Activated B cell treated with CpG ODN at 0.5 μM for 24 hours (primary cell): ENCODE measurements at regions of chr17 and their contacts with region 1.

Region 1: DNA sequence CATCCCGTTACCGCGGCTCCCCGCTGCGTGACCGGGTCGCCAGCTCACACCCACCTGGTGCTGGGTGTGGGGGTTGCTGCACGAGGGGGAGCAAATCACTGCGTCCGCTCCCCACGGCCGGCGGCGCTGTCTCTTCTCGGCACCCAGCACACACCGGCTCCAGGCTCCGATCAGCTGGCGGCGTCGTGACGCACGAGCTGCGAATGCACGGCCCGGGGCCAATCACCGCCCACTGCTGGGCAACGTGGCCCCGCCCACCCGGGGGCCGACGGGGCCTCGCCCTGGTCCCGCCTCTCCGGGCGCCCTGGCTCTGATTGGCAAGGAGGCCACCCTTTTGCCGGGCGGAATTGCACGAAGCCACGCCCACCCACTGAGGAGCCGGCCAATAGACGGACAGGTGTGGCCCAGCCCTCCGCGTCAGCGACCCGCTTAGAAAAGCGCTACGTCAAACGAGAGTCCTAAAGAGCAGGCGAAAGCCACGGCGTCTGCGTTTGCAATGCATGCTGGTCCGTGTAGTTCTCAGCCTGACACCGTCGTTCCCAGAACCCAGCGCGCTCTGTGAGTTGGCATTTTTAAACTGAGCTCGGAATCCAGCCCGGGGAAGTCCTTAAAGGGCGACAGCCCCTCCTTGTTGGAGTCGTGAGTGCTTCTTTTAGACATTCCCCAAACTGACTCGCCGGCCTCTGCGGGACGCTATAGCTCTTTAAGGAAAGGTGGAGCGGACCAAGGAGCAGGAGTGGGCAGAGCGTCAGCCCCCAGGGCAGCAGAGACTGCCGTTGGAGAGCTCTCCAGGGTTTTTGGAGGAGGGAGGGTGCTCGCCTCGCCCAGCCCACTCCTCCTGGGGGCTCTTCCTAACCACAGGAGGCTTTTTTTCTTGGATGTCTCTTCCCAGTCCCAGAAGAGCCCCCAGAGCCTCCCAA is 6.2 kb upstream of the TLCD2 start:
- DNase-seq: peak; percentile 100
- ATAC-seq: peak; percentile 87
- H3K4me3 Mint-ChIP-seq: peak overlapping the region; percentile 91
- H3K27ac Mint-ChIP-seq: peak overlapping the region; percentile 94
- H3K4me1 Mint-ChIP-seq: peaks cover 28% of the 10 kb centered on the region
- H3K27me3 Mint-ChIP-seq: peaks cover 11% of the 10 kb centered on the region
- CTCF ChIP-seq: no peak

Region 2: GRCh38 chr17:1509290-1509881 is 206.9 kb before region 1 on chr17:
- CTCF ChIA-PET with region 1: no interaction called
- POLR2A ChIA-PET with region 1: no interaction called
- intact Hi-C with region 1: no loop called
- DNase-seq: no peak
- ATAC-seq: no peak
- H3K4me3 Mint-ChIP-seq: no peak overlapping the region
- H3K27ac Mint-ChIP-seq: no peak overlapping the region
- H3K4me1 Mint-ChIP-seq: peaks cover 1% of the 10 kb centered on the region
- H3K27me3 Mint-ChIP-seq: no peaks in the 10 kb centered on the region
- CTCF ChIP-seq: no peak

Region 3: GRCh38 chr17:1648963-1649843 is 67.1 kb before region 1 on chr17:
- CTCF ChIA-PET with region 1: interaction called, 10 read pairs
- POLR2A ChIA-PET with region 1: interaction called, 18 read pairs
- intact Hi-C with region 1: loop called (anchors 1 kb)
- DNase-seq: peak; percentile 93
- ATAC-seq: peak; percentile 69
- H3K4me3 Mint-ChIP-seq: peak overlapping the region; percentile 69
- H3K27ac Mint-ChIP-seq: no peak overlapping the region
- H3K4me1 Mint-ChIP-seq: peaks cover 41% of the 10 kb centered on the region
- H3K27me3 Mint-ChIP-seq: no peaks in the 10 kb centered on the region
- CTCF ChIP-seq: no peak

Region 4: GRCh38 chr17:1752425-1753262 is 36.3 kb after region 1 on chr17:
- CTCF ChIA-PET with region 1: interaction called, 19 read pairs
- POLR2A ChIA-PET with region 1: interaction called, 15 read pairs
- intact Hi-C with region 1: no loop called
- DNase-seq: no peak
- ATAC-seq: peak; percentile 86
- H3K4me3 Mint-ChIP-seq: peak overlapping the region; percentile 38
- H3K27ac Mint-ChIP-seq: no peak overlapping the region
- H3K4me1 Mint-ChIP-seq: peaks cover 15% of the 10 kb centered on the region
- H3K27me3 Mint-ChIP-seq: no peaks in the 10 kb centered on the region
- CTCF ChIP-seq: no peak

Region 5: GRCh38 chr17:1783834-1784611 is 67.7 kb after region 1 on chr17:
- CTCF ChIA-PET with region 1: interaction called, 175 read pairs
- POLR2A ChIA-PET with region 1: interaction called, 113 read pairs
- intact Hi-C with region 1: loop called (anchors 1 kb)
- DNase-seq: no peak
- ATAC-seq: peak; percentile 90
- H3K4me3 Mint-ChIP-seq: peak overlapping the region; percentile 44
- H3K27ac Mint-ChIP-seq: peak overlapping the region; percentile 84
- H3K4me1 Mint-ChIP-seq: peaks cover 33% of the 10 kb centered on the region
- H3K27me3 Mint-ChIP-seq: no peaks in the 10 kb centered on the region
- CTCF ChIP-seq: no peak

Region 6: DNA sequence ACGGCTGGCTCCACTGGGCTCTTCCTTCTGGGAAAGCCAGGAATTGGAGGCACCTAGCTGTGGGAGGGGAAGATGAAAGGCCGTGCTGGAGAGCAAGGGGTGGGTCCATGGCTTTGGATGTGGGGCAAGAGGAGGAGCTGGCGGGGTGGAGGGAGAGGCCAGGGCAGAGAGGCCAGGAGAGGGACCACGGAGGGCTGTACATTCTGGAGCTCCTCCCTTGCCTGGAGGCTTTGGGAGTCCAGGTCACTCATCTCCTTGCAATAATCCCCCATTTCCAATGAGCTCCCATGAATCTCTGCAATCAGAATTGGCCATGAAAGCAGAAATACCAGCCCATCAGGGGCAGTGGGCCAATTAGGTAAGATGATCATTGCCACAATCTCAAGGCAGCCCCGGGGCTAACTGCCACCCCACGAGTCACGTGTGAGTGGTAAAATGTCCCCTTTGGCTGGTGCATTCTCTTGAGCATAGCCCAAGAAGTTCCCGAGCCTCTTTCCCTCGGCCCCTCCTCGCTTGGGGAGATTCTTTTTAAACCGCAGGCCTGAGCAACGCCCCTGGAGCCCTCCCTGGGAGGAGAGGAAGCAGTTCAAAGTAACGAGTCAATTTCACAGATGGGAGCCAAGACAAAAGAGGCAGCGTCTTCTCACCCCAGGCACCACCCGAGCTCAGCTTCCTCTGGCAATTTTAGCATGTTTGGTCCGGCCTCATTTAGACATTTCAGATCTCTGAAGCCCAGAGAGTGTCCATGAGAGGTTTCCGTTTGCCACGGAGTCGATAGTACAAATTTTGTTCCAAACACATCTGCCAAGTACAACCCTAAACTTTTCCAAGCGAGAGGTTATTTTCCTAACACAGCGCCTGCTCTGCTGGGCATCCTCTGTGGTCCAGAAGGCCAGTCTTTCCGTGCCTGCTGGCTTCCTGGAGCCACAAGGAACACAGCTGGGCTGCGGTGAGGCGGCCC is 295.4 kb after region 1 on chr17:
- CTCF ChIA-PET with region 1: no interaction called
- POLR2A ChIA-PET with region 1: no interaction called
- intact Hi-C with region 1: no loop called
- DNase-seq: no peak
- ATAC-seq: no peak
- H3K4me3 Mint-ChIP-seq: no peak overlapping the region
- H3K27ac Mint-ChIP-seq: no peak overlapping the region
- H3K4me1 Mint-ChIP-seq: no peaks in the 10 kb centered on the region
- H3K27me3 Mint-ChIP-seq: peaks cover 30% of the 10 kb centered on the region
- CTCF ChIP-seq: no peak

Region 7: GRCh38 chr17:2041561-2042366 is 325.4 kb after region 1 on chr17 and contains the start of gene OVCA2:
- CTCF ChIA-PET with region 1: interaction called, 4 read pairs
- POLR2A ChIA-PET with region 1: no interaction called
- intact Hi-C with region 1: loop called (anchors 1 kb)
- DNase-seq: peak; percentile 97
- ATAC-seq: peak; percentile 90
- H3K4me3 Mint-ChIP-seq: peak within 1 kb of the TSS; percentile 90
- H3K27ac Mint-ChIP-seq: peak within 1 kb of the TSS; percentile 87
- H3K4me1 Mint-ChIP-seq: peaks cover 24% of the 10 kb centered on the region
- H3K27me3 Mint-ChIP-seq: no peaks in the 10 kb centered on the region
- CTCF ChIP-seq: no peak
- total RNA-seq, gene OVCA2: 29.4 and 31.2 TPM in 2 replicates

Region 8: GRCh38 chr17:2122641-2123302 is 406.4 kb after region 1 on chr17:
- CTCF ChIA-PET with region 1: no interaction called
- POLR2A ChIA-PET with region 1: no interaction called
- intact Hi-C with region 1: no loop called
- DNase-seq: no peak
- ATAC-seq: peak; percentile 18
- H3K4me3 Mint-ChIP-seq: peak overlapping the region; percentile 16
- H3K27ac Mint-ChIP-seq: no peak overlapping the region
- H3K4me1 Mint-ChIP-seq: peaks cover 29% of the 10 kb centered on the region
- H3K27me3 Mint-ChIP-seq: no peaks in the 10 kb centered on the region
- CTCF ChIP-seq: no peak

Region 9: DNA sequence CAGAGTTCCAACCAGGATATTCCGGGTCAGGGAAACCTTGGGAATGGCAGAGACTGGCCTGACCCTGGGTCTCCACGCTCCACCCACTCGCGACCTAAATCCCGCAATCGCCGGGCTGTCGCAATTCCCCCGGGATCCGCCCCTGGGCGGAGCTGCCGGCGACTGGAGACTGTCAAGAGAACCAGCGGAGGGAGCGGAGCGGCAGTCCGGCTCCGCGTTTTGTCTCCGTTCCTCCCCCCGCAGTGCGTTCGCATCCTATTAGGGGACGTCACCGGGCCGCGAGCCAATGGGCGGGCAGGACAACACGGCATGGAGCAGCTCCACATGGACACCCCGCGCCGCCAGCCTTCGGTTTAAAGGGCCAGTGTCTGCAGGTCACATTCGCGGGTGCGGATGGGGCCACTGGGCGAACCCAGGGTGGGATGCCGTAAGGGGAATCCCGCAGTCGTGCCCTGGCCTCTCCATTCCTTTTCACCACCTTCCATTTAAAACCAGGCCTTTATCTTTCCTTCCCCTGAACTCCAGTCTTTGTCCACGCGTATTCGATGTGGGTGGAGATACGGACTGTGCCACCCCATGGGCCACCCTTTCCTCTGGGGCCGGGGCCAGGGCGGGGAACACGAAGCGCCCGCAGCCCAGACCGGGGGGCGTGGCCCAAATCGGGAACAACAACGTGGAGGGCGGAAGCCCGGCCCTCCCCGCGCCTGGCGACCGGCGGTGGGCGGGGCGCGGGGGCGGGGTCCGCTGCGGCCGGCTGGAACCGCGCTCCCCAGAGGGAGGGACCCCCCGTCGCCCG is 685.3 kb after region 1 on chr17:
- CTCF ChIA-PET with region 1: no interaction called
- POLR2A ChIA-PET with region 1: interaction called, 3 read pairs
- intact Hi-C with region 1: loop called (anchors 1 kb)
- DNase-seq: peak; percentile 99
- ATAC-seq: peak; percentile 58
- H3K4me3 Mint-ChIP-seq: peak overlapping the region; percentile 94
- H3K27ac Mint-ChIP-seq: peak overlapping the region; percentile 99
- H3K4me1 Mint-ChIP-seq: peaks cover 39% of the 10 kb centered on the region
- H3K27me3 Mint-ChIP-seq: no peaks in the 10 kb centered on the region
- CTCF ChIP-seq: no peak